OCI-LY7 (cell line): ENCODE measurements at regions of chr7 and their contacts with region 1.

Region 1: DNA sequence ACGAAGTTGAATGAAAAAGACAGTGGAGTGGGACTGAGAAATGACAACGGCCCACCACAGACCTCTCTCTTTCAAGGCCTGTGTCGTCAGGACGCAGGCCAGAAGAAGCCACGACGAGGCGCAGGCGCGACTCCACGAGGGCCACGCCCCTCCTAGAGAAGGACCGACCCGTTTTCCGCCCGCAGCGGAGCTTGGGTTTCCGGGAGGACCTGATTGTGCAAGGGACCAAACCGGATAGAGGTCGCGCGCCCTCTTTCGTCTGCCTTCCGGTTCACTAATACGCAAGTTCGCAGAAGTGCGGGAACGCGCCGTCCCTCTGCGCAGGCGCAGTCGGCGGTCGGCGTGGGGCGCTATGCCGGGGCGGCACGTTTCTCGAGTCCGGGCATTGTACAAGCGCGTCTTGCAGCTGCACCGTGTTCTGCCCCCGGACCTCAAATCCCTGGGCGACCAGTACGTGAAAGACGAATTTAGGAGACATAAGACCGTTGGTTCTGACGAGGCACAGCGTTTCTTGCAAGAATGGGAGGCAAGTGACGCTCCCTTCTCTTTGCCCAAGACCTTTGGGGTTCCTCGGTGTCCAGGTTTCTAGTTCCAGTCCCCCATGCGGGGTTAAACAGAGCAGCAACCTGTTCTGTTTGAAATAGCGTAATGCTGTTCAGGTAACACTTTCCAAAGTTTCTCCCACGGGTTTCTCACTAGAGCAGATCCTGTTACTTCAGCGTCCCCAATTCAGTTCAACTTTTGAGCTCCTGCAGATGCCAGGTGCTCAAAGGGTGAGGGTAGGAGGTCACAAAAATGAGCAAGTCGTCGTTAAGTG is at the start of gene SDHAF3:
- DNase-seq: peak; percentile 99
- H3K4me3 ChIP-seq: peak within 1 kb of the TSS; percentile 78
- H3K27ac ChIP-seq: peak within 1 kb of the TSS; percentile 76
- H3K4me1 ChIP-seq: peaks cover 28% of the 10 kb centered on the region
- CTCF ChIP-seq: peak; percentile 25; the same call in 1 of the 2 replicates
- total RNA-seq, gene SDHAF3: 9.9 and 27.9 TPM in 2 replicates

Region 2: GRCh38 chr7:96709381-96710228 is 408.0 kb before region 1 on chr7 and contains the start of gene SEM1:
- CTCF ChIA-PET with region 1: no interaction called
- POLR2A ChIA-PET with region 1: no interaction called
- intact Hi-C with region 1: loop called (anchors 10 kb)
- DNase-seq: peak; percentile 82
- H3K4me3 ChIP-seq: peak within 1 kb of the TSS; percentile 77
- H3K27ac ChIP-seq: peak within 1 kb of the TSS; percentile 62
- H3K4me1 ChIP-seq: peaks cover 19% of the 10 kb centered on the region
- CTCF ChIP-seq: 0 out of 2 replicates have a peak, but pooled peaks have one; percentile 3
- total RNA-seq, gene SEM1: 89.8 and 201 TPM in 2 replicates